ENCODE measurements at regions of chr6 and their contacts with region 1.

Region 1: DNA sequence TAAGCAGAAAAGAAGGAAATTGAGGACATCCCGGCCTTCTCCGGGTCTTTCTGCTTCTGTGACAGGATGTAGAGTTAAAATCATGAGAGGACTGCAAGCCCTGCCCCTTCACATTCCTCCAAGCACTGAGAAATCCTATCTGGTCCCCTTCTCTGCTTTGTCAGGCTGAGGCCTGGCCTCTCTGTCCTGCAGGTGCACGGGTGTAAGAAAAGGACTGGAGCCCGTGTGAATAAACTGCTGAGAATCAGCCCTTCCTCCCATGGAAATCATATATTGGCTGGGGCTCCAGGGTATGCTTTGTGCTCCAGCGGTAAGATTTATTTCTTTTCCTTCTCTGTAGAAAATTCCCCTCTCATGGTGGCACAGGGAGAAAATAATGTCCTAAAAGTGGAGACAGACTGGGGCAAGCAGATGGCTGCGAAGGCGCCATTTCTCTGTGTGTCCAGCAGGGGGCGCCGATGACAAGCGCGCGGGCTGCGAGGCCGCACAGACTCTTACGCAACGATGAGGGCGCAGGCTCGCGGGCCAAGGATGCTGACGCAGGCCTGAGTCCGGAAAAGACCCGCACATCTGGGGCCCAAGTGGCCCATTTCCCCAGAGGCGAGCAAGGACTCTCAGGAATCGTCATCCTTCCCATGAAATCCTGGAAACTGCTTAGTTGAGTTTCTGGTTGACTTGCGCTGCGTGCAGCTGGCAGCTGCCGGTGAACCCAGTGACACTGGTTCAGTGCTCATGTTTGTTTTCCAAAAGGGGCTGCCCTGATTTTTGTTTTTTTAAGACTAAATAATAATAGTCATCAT is 258.6 kb downstream of the ADGB start:
- DNase-seq: peak; percentile 83
- H3K4me3 ChIP-seq: peak overlapping the region; percentile 42 to 45
- H3K27ac ChIP-seq: peak overlapping the region; percentile 43 to 89
- H3K4me1 ChIP-seq: peaks cover 0 to 11% of the 10 kb centered on the region in 2 experiments; a peak in 2 of 4 replicates
- H3K27me3 ChIP-seq: no peaks in the 10 kb centered on the region
- CTCF ChIP-seq: peak; percentile 89
- EP300 ChIP-seq: peak in 1 of 2 experiments; percentile 44; a peak in 1 of 4 replicates
- RAD21 ChIP-seq: peak; percentile 97

Region 2: DNA sequence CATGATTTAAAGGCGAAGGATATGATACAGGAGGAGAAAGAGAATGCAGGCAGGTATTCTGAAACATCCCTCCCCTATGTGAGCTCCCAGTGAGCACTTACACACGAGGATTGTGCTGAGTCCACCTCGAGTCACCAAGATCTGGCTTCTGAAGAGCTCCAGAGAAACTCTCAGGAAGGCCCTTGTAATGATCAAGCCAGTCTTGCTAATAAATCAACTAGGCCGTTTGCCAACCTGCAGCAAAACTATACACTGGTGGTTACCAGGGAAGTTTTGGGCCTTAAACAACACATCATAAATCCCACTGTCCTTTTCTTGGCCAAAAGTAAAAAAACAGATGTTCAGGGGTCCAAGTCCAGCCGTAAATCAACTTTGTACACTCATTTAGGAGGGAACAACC is 426.1 kb after region 1 on chr6:
- CTCF ChIA-PET with region 1: interaction called, 11 read pairs
- POLR2A ChIA-PET with region 1: no interaction called
- DNase-seq: no peak
- H3K4me3 ChIP-seq: no peak overlapping the region
- H3K27ac ChIP-seq: peak overlapping the region in 1 of 2 experiments; percentile 11; a peak in 1 of 4 replicates
- H3K4me1 ChIP-seq: no peaks in the 10 kb centered on the region; a peak in 2 of 4 replicates
- H3K27me3 ChIP-seq: no peaks in the 10 kb centered on the region
- CTCF ChIP-seq: no peak
- EP300 ChIP-seq: no peak
- RAD21 ChIP-seq: no peak